ENCODE measurements at regions of chr10 and their contacts with region 1.

Region 1: GRCh38 chr10:95792874-95793285 is 36.9 kb downstream of the ENTPD1 start:
- DNase-seq: no peak
- H3K4me3 ChIP-seq: no peak overlapping the region
- H3K27ac ChIP-seq: no peak overlapping the region
- H3K4me1 ChIP-seq: no peaks in the 10 kb centered on the region
- H3K27me3 ChIP-seq: no peaks in the 10 kb centered on the region
- CTCF ChIP-seq: no peak

Region 2: GRCh38 chr10:95850791-95851190 is 57.9 kb after region 1 on chr10:
- CTCF ChIA-PET with region 1: no interaction called
- POLR2A ChIA-PET with region 1: no interaction called
- intact Hi-C with region 1: loop called (anchors 10 kb)
- DNase-seq: no peak
- H3K4me3 ChIP-seq: no peak overlapping the region
- H3K27ac ChIP-seq: no peak overlapping the region
- H3K4me1 ChIP-seq: no peaks in the 10 kb centered on the region
- H3K27me3 ChIP-seq: no peaks in the 10 kb centered on the region
- CTCF ChIP-seq: no peak